Head of caudate nucleus (tissue), 42 donors: ENCODE measurements at regions of chr18 and their contacts with region 1.

Region 1: DNA sequence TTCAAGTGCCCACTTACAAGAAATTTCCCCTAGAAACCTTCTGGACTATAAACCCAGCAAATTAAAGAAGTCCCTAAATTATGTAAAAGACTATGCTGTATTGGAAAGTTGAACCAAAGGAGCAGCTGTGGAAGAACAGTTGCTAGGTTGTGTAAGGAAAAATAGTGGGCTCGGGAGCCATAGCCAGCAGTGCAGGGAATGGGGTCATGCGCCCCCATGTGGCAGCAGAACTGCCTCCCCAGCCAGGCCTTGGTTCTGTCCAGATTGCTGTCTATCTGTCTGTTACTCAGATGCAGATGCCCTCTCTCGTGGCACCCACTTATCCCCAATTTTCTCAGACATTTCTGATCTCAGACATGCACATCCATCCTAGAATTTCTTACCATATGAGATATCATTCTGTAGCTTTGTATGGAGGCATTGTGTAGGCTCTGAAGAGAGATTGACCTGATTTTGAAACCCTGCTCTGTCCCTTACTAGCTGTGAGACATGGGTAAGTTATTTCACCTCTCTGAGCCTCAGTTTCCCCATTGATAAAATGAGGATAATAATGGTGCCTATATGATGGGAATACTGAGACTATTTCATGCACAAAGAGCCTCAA is 258.3 kb downstream of the SS18 start:
- DNase-seq: peak; percentile 40 to 87 (median 69)

Region 2: GRCh38 chr18:24878289-24878688 is 953.8 kb before region 1 on chr18:
- intact Hi-C with region 1: loop called (anchors 10 kb)
- DNase-seq: peak in 16 of 42 donors; percentile 14 to 78 (median 45)